HEK293 (cell line): ENCODE measurements at regions of chr19 and their contacts with region 1.

Region 1: GRCh38 chr19:54390942-54391577 is 24.2 kb upstream of the TTYH1 start:
- H3K4me3 ChIP-seq: no peak overlapping the region
- H3K27ac ChIP-seq: no peak overlapping the region
- H3K4me1 ChIP-seq: no peaks in the 10 kb centered on the region
- CTCF ChIP-seq: peak; percentile 57

Region 2: DNA sequence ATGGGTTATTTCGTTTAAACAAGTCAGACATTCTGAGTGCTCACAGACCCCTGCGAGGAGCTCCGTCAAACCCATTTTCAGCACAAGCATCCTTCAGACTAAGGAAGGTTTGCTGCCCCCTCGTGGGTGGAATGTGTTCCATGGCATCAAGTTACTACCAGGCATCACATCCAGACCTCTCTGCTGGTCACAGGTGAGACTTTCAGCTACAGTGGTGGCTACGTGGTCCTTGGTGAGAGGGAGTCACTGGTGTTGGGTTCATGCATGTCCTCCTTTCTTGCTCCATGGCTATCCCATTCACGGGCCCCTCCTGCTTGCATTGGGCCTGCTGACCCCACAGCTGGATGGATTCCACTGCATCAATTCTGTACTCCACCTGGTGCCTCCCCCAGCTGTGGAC is 124.9 kb before region 1 on chr19:
- CTCF ChIA-PET with region 1: interaction called, 17 read pairs
- POLR2A ChIA-PET with region 1: no interaction called
- H3K4me3 ChIP-seq: no peak overlapping the region
- H3K27ac ChIP-seq: no peak overlapping the region
- H3K4me1 ChIP-seq: no peaks in the 10 kb centered on the region
- CTCF ChIP-seq: peak; percentile 52

Region 3: DNA sequence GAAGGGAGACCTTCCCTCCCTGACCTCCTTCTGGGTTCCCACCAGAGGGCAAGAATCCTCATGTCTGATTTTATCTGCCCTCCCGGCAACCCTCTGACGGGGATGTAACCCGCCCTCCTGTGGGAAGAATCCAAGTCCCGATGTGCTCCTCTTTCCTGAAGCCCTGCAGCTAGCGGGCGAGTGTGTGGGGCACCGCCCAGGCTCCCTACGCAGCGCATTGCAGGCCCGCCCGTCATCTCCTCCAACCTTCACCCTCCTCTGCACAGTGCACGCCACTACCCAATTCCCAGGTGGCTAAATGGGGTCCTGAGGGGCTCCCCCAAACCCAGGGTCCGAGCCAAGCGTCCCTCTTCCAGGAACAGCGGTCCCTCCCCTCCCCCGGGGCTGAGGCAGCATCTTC is 33.7 kb before region 1 on chr19:
- CTCF ChIA-PET with region 1: interaction called, 34 read pairs
- POLR2A ChIA-PET with region 1: no interaction called
- H3K4me3 ChIP-seq: no peak overlapping the region
- H3K27ac ChIP-seq: no peak overlapping the region
- H3K4me1 ChIP-seq: no peaks in the 10 kb centered on the region
- CTCF ChIP-seq: no peak

Region 4: GRCh38 chr19:54373781-54374631 is 17.1 kb before region 1 on chr19:
- CTCF ChIA-PET with region 1: interaction called, 19 read pairs
- POLR2A ChIA-PET with region 1: no interaction called
- H3K4me3 ChIP-seq: no peak overlapping the region
- H3K27ac ChIP-seq: no peak overlapping the region
- H3K4me1 ChIP-seq: no peaks in the 10 kb centered on the region
- CTCF ChIP-seq: no peak

Region 5: DNA sequence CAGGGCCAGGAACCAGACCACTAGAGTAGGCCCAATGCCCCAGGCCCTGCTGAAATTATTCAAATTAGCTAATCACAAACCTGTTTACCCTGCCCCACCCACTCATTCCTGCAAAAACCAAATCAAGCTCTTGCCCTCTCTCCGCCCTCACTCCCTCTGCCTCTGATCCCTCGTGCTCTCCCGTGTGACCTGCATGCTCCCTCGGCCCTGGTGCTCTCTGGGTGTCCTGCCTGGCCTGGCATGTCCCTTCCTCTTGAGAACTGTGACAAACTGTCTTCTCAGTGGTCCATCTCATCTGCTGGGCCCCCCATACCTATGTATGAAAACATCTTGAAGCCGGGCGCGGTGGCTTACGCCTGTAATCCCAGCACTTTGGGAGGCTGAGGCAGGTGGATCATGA is 12.0 kb after region 1 on chr19:
- CTCF ChIA-PET with region 1: interaction called, 22 read pairs
- POLR2A ChIA-PET with region 1: no interaction called
- H3K4me3 ChIP-seq: no peak overlapping the region
- H3K27ac ChIP-seq: no peak overlapping the region
- H3K4me1 ChIP-seq: no peaks in the 10 kb centered on the region
- CTCF ChIP-seq: no peak

Region 6: GRCh38 chr19:54430306-54431254 is 39.5 kb after region 1 on chr19:
- CTCF ChIA-PET with region 1: interaction called, 6 read pairs
- POLR2A ChIA-PET with region 1: interaction called, 10 read pairs
- H3K4me3 ChIP-seq: peak overlapping the region; percentile 41
- H3K27ac ChIP-seq: no peak overlapping the region
- H3K4me1 ChIP-seq: peaks cover 10% of the 10 kb centered on the region
- CTCF ChIP-seq: peak; percentile 45; the same call in 1 of the 2 replicates